CD4-positive, alpha-beta T cell (primary cell): ENCODE measurements at regions of chr10 and their contacts with region 1.

Region 1: DNA sequence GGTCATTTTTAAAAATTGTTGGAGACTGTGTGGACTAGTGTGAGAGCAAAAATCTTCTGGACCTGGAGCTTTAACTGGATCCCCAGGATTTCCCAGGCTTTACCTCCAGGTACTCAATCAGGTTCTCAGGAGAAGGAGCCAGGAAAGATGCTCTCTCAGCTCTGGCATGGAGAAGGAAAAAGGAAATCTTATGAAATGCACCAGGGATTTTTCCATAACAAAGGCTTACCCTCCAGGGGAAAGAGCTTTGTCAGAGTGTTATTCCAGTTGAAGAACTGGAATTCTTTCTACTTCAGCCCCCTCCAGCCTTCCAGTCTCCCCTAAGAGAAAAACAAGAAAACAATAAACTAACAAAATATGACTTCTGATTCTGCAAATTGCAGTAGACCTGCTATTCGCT is 436.7 kb upstream of the ANKRD30A start:
- DNase-seq: no peak
- ATAC-seq: no peak
- H3K4me3 ChIP-seq: no peak overlapping the region
- H3K4me3 Mint-ChIP-seq: no peak overlapping the region
- H3K27ac ChIP-seq: no peak overlapping the region
- H3K27ac Mint-ChIP-seq: no peak overlapping the region
- H3K4me1 ChIP-seq: no peaks in the 10 kb centered on the region
- H3K4me1 Mint-ChIP-seq: no peaks in the 10 kb centered on the region
- H3K27me3 ChIP-seq: no peaks in the 10 kb centered on the region
- H3K27me3 Mint-ChIP-seq: no peaks in the 10 kb centered on the region
- CTCF ChIP-seq: no peak

Region 2: DNA sequence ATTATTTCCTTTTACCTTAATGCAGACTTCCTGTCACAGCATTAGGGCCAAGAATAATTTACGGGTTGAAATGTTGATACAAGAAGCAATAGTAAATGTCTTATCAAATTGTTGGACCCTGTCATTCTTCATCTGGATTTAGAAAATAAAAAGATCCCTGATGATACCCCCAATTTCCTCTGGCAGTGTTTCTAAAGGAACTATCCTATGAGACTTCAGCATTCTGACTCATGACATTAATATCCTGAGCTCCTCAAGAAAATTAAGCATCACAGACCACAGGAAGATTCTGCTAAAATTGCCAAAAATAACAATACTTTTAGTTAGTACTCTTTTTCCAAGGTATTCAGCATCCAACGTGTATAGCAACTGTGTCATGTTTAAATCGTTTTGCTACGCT is 53.8 kb before region 1 on chr10:
- CTCF ChIA-PET with region 1: no interaction called
- POLR2A ChIA-PET with region 1: no interaction called
- intact Hi-C with region 1: loop called in 1 of 2 experiments (anchors 5 kb)
- DNase-seq: no peak
- ATAC-seq: no peak
- H3K4me3 ChIP-seq: no peak overlapping the region
- H3K4me3 Mint-ChIP-seq: no peak overlapping the region
- H3K27ac ChIP-seq: no peak overlapping the region
- H3K27ac Mint-ChIP-seq: no peak overlapping the region
- H3K4me1 ChIP-seq: no peaks in the 10 kb centered on the region
- H3K4me1 Mint-ChIP-seq: no peaks in the 10 kb centered on the region
- H3K27me3 ChIP-seq: no peaks in the 10 kb centered on the region
- H3K27me3 Mint-ChIP-seq: no peaks in the 10 kb centered on the region
- CTCF ChIP-seq: no peak

Region 3: GRCh38 chr10:37619336-37619735 is 930.6 kb after region 1 on chr10:
- CTCF ChIA-PET with region 1: no interaction called
- POLR2A ChIA-PET with region 1: no interaction called
- intact Hi-C with region 1: no loop called
- DNase-seq: no peak
- ATAC-seq: no peak
- H3K4me3 ChIP-seq: no peak overlapping the region
- H3K4me3 Mint-ChIP-seq: no peak overlapping the region
- H3K27ac ChIP-seq: no peak overlapping the region
- H3K27ac Mint-ChIP-seq: no peak overlapping the region
- H3K4me1 ChIP-seq: no peaks in the 10 kb centered on the region
- H3K4me1 Mint-ChIP-seq: no peaks in the 10 kb centered on the region
- H3K27me3 ChIP-seq: no peaks in the 10 kb centered on the region
- H3K27me3 Mint-ChIP-seq: no peaks in the 10 kb centered on the region
- CTCF ChIP-seq: no peak

Region 4: GRCh38 chr10:37960591-37961137 is 1271.9 kb after region 1 on chr10:
- CTCF ChIA-PET with region 1: no interaction called
- POLR2A ChIA-PET with region 1: no interaction called
- intact Hi-C with region 1: no loop called
- DNase-seq: no peak
- ATAC-seq: no peak
- H3K4me3 ChIP-seq: no peak overlapping the region
- H3K4me3 Mint-ChIP-seq: no peak overlapping the region
- H3K27ac ChIP-seq: no peak overlapping the region
- H3K27ac Mint-ChIP-seq: no peak overlapping the region
- H3K4me1 ChIP-seq: no peaks in the 10 kb centered on the region
- H3K4me1 Mint-ChIP-seq: no peaks in the 10 kb centered on the region
- H3K27me3 ChIP-seq: no peaks in the 10 kb centered on the region
- H3K27me3 Mint-ChIP-seq: no peaks in the 10 kb centered on the region
- CTCF ChIP-seq: no peak